ENCODE measurements at regions of chr22 and their contacts with region 1.

Region 1: DNA sequence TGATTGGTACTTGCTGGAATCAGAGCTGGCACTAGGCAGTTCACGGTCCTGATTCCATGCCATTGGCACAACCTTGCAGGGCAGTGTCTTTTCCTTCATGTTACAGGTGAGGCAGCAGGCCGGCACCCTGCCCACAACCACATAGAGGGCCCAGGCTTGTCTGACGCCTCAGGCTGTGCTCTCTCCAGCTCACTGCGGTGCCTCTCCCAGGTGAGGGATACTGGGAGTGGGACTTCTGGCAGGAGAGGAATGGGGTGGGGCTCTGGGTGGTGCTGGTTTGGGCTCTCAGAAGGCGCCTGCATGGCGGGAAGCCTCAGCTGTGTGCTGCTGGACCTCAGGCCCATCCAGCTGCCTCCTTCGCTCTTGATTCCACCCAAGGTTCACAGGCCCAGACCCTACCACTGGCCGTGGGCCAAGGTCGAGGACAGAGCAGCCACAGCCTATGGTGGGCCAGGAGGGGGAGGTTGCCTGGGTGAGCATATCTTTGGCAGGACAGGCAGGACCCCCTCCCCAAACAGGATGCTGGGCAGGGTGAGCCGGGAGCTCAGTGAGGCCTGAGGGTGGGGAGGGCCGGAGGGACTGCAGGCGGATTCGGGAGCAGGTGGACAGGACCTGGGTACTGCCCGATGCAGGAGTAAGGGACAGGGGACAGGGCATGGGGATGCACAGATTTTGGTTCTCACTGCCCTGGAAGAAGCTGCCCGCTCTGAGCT is 7.0 kb upstream of the MPPED1 start:
- DNase-seq: no peak
- H3K4me3 ChIP-seq: no peak overlapping the region
- H3K27ac ChIP-seq: no peak overlapping the region
- H3K4me1 ChIP-seq: no peaks in the 10 kb centered on the region
- H3K27me3 ChIP-seq: no peaks in the 10 kb centered on the region
- CTCF ChIP-seq: no peak
- EP300 ChIP-seq: no peak
- POLR2A ChIP-seq: no peak

Region 2: GRCh38 chr22:43142880-43143562 is 261.8 kb before region 1 on chr22 and contains the start of gene MCAT:
- intact Hi-C with region 1: no loop called
- DNase-seq: peak; percentile 79 to 90 (median 84)
- H3K4me3 ChIP-seq: peak within 1 kb of the TSS; percentile 95
- H3K27ac ChIP-seq: no peak within 1 kb of the TSS
- H3K4me1 ChIP-seq: peaks cover 5% of the 10 kb centered on the region
- H3K27me3 ChIP-seq: no peaks in the 10 kb centered on the region
- CTCF ChIP-seq: peak in 1 of 3 donors; percentile 33
- EP300 ChIP-seq: no peak
- POLR2A ChIP-seq: peak; percentile 56
- total RNA-seq, gene MCAT: 14.6 to 34.0 (median 18.0) TPM

Region 3: DNA sequence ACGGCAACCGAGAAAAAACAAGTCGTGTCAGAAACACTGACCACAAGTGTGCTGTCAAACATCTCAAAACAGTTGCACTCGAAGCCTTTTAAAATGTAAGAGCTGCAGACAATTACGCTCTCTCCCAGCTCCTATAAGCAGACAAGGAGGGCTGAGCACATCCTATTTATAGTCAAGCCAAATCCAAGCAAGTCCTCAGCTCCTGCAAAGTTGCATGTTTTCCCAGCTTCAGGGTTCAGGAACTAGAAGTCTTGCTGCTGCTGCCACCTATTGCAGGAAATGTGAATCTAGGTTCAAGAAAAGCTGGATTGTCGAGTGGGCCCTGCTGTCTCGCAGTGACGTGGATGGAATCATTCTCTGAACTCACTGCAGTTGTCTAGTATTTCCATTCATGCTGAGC is 391.7 kb after region 1 on chr22:
- intact Hi-C with region 1: loop called in 1 of 4 experiments (anchors 10 kb)
- DNase-seq: no peak
- H3K4me3 ChIP-seq: no peak overlapping the region
- H3K27ac ChIP-seq: no peak overlapping the region
- H3K4me1 ChIP-seq: no peaks in the 10 kb centered on the region
- H3K27me3 ChIP-seq: no peaks in the 10 kb centered on the region
- CTCF ChIP-seq: no peak
- EP300 ChIP-seq: no peak
- POLR2A ChIP-seq: no peak